GM12878 (cell line): ENCODE measurements at regions of chr18 and their contacts with region 1.

Region 1: DNA sequence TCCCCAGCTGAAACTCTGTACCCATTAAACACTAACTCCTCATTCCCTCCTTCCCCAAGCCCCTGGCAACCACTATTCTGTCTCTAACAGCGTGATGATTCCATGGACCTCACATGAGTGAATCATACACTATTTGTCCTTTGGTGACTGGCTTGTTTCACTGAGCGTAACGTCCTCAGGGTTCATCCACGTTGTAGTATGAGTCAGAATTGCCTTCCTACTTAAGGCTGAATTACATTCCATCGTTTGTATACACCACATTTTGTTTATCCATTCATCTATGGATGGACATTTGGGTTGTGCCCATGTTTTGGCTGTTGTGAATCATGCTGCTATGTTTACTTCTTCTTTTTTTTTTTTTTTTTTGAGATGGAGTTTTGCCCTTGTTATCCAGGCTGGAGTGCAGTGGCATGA is 19.6 kb upstream of the CABLES1 start:
- DNase-seq: no peak
- ATAC-seq: no peak
- H3K4me3 ChIP-seq: no peak overlapping the region
- H3K27ac ChIP-seq: no peak overlapping the region
- H3K4me1 ChIP-seq: no peaks in the 10 kb centered on the region
- H3K27me3 ChIP-seq: no peaks in the 10 kb centered on the region; a peak in 1 of 4 replicates
- CTCF ChIP-seq: no peak
- EP300 ChIP-seq: no peak
- POLR2A ChIP-seq: no peak
- RAD21 ChIP-seq: no peak

Region 2: DNA sequence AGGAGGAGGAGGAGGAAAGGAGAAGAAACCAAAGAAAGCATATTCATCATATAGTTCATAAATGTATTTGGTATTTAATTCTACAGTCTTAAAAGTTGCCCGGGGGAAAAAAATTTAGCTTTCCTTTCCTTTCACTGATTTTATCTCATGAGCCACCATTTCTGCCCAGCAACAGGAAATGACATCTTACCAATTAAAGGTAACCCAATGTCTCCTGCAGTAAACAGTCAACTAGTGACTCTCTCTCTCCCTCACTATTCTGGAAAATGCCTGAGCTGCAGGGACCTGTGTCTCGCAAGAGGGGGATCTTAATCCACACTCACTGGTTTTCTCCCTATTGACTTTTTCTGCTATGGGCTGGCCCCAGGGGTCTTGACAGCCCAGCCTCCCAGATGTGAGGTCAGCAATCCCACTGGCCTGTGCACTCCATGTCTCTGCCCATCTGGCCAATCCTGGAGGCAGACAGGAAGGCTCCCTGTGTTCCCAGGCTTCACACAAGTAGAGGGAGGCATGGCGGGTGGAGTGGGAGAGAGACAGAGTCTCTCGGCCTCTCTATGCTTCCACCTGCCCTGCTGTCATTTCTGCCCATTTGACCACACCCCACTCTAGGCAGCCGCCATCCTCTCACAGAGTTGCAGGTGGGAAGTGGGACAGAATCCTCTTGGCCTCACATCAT is 65.9 kb before region 1 on chr18:
- CTCF ChIA-PET with region 1: no interaction called
- POLR2A ChIA-PET with region 1: no interaction called
- RAD21 ChIA-PET with region 1: no interaction called
- SMC1A ChIA-PET with region 1: no interaction called
- in situ Hi-C with region 1: no loop called
- intact Hi-C with region 1: loop called (anchors 10 kb)
- DNase-seq: no peak
- ATAC-seq: no peak
- H3K4me3 ChIP-seq: no peak overlapping the region
- H3K27ac ChIP-seq: no peak overlapping the region
- H3K4me1 ChIP-seq: no peaks in the 10 kb centered on the region
- H3K27me3 ChIP-seq: no peaks in the 10 kb centered on the region; a peak in 1 of 4 replicates
- CTCF ChIP-seq: no peak
- EP300 ChIP-seq: no peak
- POLR2A ChIP-seq: no peak
- RAD21 ChIP-seq: no peak